K562 (cell line): ENCODE measurements at regions of chr18 and their contacts with region 1.

Region 1: GRCh38 chr18:32470713-32471633 is at the start of gene GAREM1:
- DNase-seq: peak; percentile 86 to 94 (median 89)
- ATAC-seq: peak; percentile 100
- H3K4me3 ChIP-seq: peak within 1 kb of the TSS; percentile 45
- H3K27ac ChIP-seq: no peak within 1 kb of the TSS
- H3K4me1 ChIP-seq: peaks cover 11 to 14% of the 10 kb centered on the region in 2 experiments; a peak in 4 of 5 replicates
- H3K27me3 ChIP-seq: peaks cover 16% of the 10 kb centered on the region in 2 experiments
- CTCF ChIP-seq: peak; percentile 51 to 77 (median 69)
- EP300 ChIP-seq: no peak
- POLR2A ChIP-seq: no peak
- RAD21 ChIP-seq: peak; percentile 45 to 66
- polyA plus RNA-seq, gene GAREM1: 0.04 TPM in 1 of 2 experiments, not detected in the other

Region 2: GRCh38 chr18:32158108-32158624 is 312.8 kb before region 1 on chr18:
- CTCF ChIA-PET with region 1: no interaction called
- POLR2A ChIA-PET with region 1: no interaction called
- in situ Hi-C with region 1: no loop called
- intact Hi-C with region 1: loop called (anchors 2 kb)
- DNase-seq: peak; percentile 67 to 89 (median 71)
- ATAC-seq: peak; percentile 97
- H3K4me3 ChIP-seq: no peak overlapping the region
- H3K27ac ChIP-seq: no peak overlapping the region
- H3K4me1 ChIP-seq: no peaks in the 10 kb centered on the region
- H3K27me3 ChIP-seq: peaks cover 0 to 4% of the 10 kb centered on the region in 2 experiments; a peak in 1 of 5 replicates
- CTCF ChIP-seq: peak; percentile 82 to 91 (median 89)
- EP300 ChIP-seq: no peak
- POLR2A ChIP-seq: no peak
- RAD21 ChIP-seq: peak; percentile 77 to 94

Region 3: GRCh38 chr18:32271672-32272208 is 199.2 kb before region 1 on chr18:
- CTCF ChIA-PET with region 1: interaction called, 4 read pairs
- POLR2A ChIA-PET with region 1: no interaction called
- in situ Hi-C with region 1: no loop called
- intact Hi-C with region 1: loop called (anchors 5 kb)
- DNase-seq: peak; percentile 34 to 56 (median 47)
- ATAC-seq: peak; percentile 87
- H3K4me3 ChIP-seq: no peak overlapping the region
- H3K27ac ChIP-seq: no peak overlapping the region
- H3K4me1 ChIP-seq: no peaks in the 10 kb centered on the region
- H3K27me3 ChIP-seq: 0 out of 5 replicates have a peak, but pooled peaks cover 0 to 2% of the 10 kb centered on the region in 2 experiments
- CTCF ChIP-seq: peak; percentile 41 to 75 (median 58); a peak in 3 of 6 replicates
- EP300 ChIP-seq: no peak
- POLR2A ChIP-seq: no peak
- RAD21 ChIP-seq: peak; percentile 68 to 79

Region 4: DNA sequence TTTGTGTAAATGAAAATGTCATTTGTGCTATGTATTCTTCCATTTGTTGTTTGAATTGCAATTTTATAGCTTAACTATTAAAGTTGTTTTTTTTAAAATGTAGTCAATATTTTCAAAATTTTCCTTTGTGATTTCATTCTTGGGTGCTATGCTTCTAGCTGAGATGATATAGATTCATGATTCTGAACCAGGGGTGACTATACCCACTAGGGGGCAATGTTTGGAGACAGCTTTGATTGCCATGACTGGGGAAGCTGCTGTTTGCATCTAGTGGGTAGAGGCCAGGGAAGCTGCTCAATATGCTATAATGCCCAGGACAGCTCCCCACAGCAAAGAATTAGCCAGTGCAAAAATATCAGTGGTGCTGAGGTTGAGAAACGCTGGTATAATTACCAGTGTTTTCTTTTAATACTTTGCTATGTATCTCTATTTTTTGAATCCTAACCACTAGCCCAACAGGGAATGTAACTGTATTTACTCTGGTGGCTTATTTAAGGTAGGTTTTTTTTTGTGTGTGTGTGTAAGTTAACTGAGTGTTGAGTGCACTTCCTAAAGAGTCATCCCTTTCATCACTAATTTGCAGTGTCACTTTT is 181.4 kb before region 1 on chr18:
- CTCF ChIA-PET with region 1: no interaction called
- POLR2A ChIA-PET with region 1: no interaction called
- in situ Hi-C with region 1: no loop called
- intact Hi-C with region 1: loop called (anchors 2 kb)
- DNase-seq: peak in 2 of 4 experiments; percentile 44 to 53
- ATAC-seq: peak; percentile 84
- H3K4me3 ChIP-seq: no peak overlapping the region
- H3K27ac ChIP-seq: no peak overlapping the region
- H3K4me1 ChIP-seq: no peaks in the 10 kb centered on the region
- H3K27me3 ChIP-seq: no peaks in the 10 kb centered on the region; a peak in 1 of 5 replicates
- CTCF ChIP-seq: peak; percentile 48 to 55 (median 52)
- EP300 ChIP-seq: no peak
- POLR2A ChIP-seq: no peak
- RAD21 ChIP-seq: peak; percentile 21 to 34; a peak in 2 of 4 replicates

Region 5: DNA sequence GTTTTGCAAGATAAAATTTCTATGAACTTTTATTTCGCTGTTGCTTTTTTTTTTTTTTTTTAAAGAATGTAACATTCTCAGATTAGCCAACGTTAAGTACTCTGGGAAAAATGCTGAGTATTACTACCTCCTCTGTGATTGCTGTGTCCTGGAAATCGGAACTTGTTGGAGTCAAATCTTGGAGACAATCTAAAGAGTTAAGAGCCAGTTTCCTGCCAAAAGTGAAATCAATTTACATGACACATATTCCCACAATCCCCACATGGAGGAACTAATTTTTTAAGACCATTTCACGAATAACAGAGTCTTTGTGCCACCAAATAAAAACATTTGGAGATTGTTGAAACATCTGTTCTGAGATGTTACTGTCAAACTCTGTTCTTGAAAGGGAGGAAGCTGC is 153.3 kb before region 1 on chr18:
- CTCF ChIA-PET with region 1: no interaction called
- POLR2A ChIA-PET with region 1: no interaction called
- in situ Hi-C with region 1: no loop called
- intact Hi-C with region 1: no loop called
- DNase-seq: no peak
- ATAC-seq: no peak
- H3K4me3 ChIP-seq: no peak overlapping the region
- H3K27ac ChIP-seq: no peak overlapping the region
- H3K4me1 ChIP-seq: no peaks in the 10 kb centered on the region
- H3K27me3 ChIP-seq: no peaks in the 10 kb centered on the region
- CTCF ChIP-seq: no peak
- EP300 ChIP-seq: no peak
- POLR2A ChIP-seq: no peak
- RAD21 ChIP-seq: no peak

Region 6: GRCh38 chr18:32333781-32334180 is 137.2 kb before region 1 on chr18:
- CTCF ChIA-PET with region 1: no interaction called
- POLR2A ChIA-PET with region 1: no interaction called
- in situ Hi-C with region 1: no loop called
- intact Hi-C with region 1: loop called (anchors 10 kb)
- DNase-seq: no peak
- ATAC-seq: no peak
- H3K4me3 ChIP-seq: no peak overlapping the region
- H3K27ac ChIP-seq: no peak overlapping the region
- H3K4me1 ChIP-seq: no peaks in the 10 kb centered on the region
- H3K27me3 ChIP-seq: peaks cover 0 to 11% of the 10 kb centered on the region in 2 experiments; a peak in 2 of 5 replicates
- CTCF ChIP-seq: no peak
- EP300 ChIP-seq: no peak
- POLR2A ChIP-seq: no peak
- RAD21 ChIP-seq: no peak

Region 7: GRCh38 chr18:32405588-32405987 is 65.4 kb before region 1 on chr18:
- CTCF ChIA-PET with region 1: no interaction called
- POLR2A ChIA-PET with region 1: no interaction called
- in situ Hi-C with region 1: no loop called
- intact Hi-C with region 1: no loop called
- DNase-seq: no peak
- ATAC-seq: no peak
- H3K4me3 ChIP-seq: no peak overlapping the region
- H3K27ac ChIP-seq: no peak overlapping the region
- H3K4me1 ChIP-seq: no peaks in the 10 kb centered on the region
- H3K27me3 ChIP-seq: no peaks in the 10 kb centered on the region
- CTCF ChIP-seq: no peak
- EP300 ChIP-seq: no peak
- POLR2A ChIP-seq: no peak
- RAD21 ChIP-seq: no peak